G401 (cell line): ENCODE measurements at regions of chr20 and their contacts with region 1.

Region 1: GRCh38 chr20:32634041-32634805 is 39.5 kb downstream of the C20orf203 start:
- DNase-seq: no peak

Region 2: GRCh38 chr20:32516583-32517517 is 117.4 kb before region 1 on chr20:
- in situ Hi-C with region 1: loop called (anchors 5 kb)
- DNase-seq: no peak